ENCODE measurements at regions of chr2 and their contacts with region 1.

Region 1: GRCh38 chr2:196149948-196150347 is 21.4 kb downstream of the STK17B start:
- H3K4me3 Mint-ChIP-seq: no peak overlapping the region
- H3K27ac Mint-ChIP-seq: peak overlapping the region; percentile 74
- H3K4me1 Mint-ChIP-seq: peaks cover 28% of the 10 kb centered on the region
- H3K27me3 Mint-ChIP-seq: no peaks in the 10 kb centered on the region

Region 2: GRCh38 chr2:196277002-196277401 is 127.1 kb after region 1 on chr2:
- intact Hi-C with region 1: loop called (anchors 5 kb)
- H3K4me3 Mint-ChIP-seq: no peak overlapping the region
- H3K27ac Mint-ChIP-seq: no peak overlapping the region
- H3K4me1 Mint-ChIP-seq: peaks cover 25% of the 10 kb centered on the region
- H3K27me3 Mint-ChIP-seq: peaks cover 2% of the 10 kb centered on the region

Region 3: DNA sequence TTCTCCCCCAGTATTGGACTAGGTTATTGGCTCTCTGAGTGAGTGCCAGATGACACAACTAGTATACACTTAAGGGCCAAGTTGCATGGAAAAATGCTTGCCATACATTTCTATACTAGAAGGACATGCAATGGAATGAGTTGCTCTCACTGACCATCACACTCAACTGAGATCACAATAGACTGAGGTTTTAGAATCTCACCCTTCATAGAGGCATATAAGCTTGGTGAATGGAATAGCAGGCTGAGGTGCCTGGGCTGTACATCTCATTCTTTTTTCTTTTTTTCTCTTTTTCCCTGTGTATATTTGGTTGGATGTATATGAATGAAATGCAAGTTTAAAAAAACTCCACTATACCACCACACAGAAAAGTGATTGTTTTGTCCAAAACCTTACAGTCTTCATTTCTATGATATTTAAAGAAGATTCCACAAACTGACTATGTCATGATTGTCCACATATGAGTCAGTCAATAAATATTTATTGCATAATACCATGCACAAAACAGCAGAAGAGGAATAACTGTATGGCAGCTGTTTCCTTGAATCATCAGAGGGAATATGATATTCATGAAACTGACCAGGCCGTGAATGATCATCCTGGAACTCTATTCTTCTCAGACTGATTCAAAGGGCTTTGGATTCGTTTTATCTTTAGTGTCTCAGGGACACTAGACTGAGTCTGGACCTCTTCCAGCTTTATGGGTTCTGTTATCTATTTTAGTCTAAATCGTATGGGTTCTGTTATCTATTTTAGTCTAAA is 144.0 kb after region 1 on chr2:
- intact Hi-C with region 1: no loop called
- H3K4me3 Mint-ChIP-seq: no peak overlapping the region
- H3K27ac Mint-ChIP-seq: no peak overlapping the region
- H3K4me1 Mint-ChIP-seq: peaks cover 9% of the 10 kb centered on the region
- H3K27me3 Mint-ChIP-seq: no peaks in the 10 kb centered on the region